ENCODE measurements at regions of chr19 and their contacts with region 1.

Region 1: GRCh38 chr19:34974646-34975045 is 10.6 kb upstream of the ZNF792 start:
- DNase-seq: no peak
- H3K4me3 ChIP-seq: no peak overlapping the region
- H3K27ac ChIP-seq: peak overlapping the region in 5 of 8 donors; percentile 28 to 79 (median 78)
- H3K4me1 ChIP-seq: peaks cover 0 to 34% (median 18%) of the 10 kb centered on the region in 6 donors
- H3K27me3 ChIP-seq: no peaks in the 10 kb centered on the region
- CTCF ChIP-seq: no peak
- POLR2A ChIP-seq: no peak

Region 2: GRCh38 chr19:35013031-35013819 is 38.6 kb after region 1 on chr19:
- intact Hi-C with region 1: loop called (anchors 2 kb)
- DNase-seq: peak; percentile 94
- H3K4me3 ChIP-seq: peak overlapping the region in 1 of 8 donors; percentile 46
- H3K27ac ChIP-seq: peak overlapping the region; percentile 42 to 99 (median 76)
- H3K4me1 ChIP-seq: peaks cover 28 to 100% (median 78%) of the 10 kb centered on the region in 6 donors
- H3K27me3 ChIP-seq: no peaks in the 10 kb centered on the region
- CTCF ChIP-seq: peak; percentile 97 to 99 (median 99)
- POLR2A ChIP-seq: no peak

Region 3: DNA sequence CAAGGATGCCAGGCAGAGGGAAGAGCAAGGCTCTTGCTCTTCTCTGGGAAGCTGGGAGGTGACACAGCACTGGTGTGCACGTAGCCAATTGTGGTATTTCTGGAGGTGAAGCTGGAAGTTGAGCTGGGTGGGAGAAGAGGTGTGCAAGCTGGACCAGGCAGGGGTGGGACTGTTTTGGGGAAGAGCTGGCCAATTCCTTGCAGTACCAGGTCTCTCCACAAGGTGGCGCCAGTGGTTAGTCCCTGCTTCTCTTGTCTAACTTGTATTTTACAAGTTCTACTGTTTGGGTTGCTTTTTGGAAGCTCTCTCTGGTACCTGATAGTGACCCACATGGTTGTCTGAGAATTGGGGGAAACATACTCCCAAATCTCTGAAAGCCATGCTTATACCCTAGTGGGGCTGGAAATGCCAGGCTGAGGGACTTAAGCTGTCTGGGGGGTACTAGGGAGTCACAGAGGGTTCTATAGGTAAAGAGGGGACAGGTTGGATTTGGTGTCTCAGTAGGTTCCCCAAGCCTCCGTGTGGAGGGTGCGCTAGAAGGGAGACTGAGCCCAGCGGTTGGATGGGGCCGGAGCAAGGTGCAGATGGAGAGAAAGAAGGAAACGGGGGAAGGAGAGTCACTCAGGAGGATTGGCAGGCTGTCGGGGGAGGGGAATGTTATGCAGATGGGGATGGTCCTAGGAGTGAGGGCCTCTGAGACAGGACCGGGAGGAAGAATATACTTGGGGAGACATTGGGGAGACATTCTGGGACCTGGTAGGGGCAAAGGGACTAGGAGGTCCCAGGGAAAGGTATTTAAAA is 69.9 kb after region 1 on chr19:
- intact Hi-C with region 1: no loop called
- DNase-seq: no peak
- H3K4me3 ChIP-seq: no peak overlapping the region
- H3K27ac ChIP-seq: no peak overlapping the region
- H3K4me1 ChIP-seq: peaks cover 31 to 71% (median 53%) of the 10 kb centered on the region in 6 donors
- H3K27me3 ChIP-seq: peaks cover 0 to 23% (median 0%) of the 10 kb centered on the region in 7 donors
- CTCF ChIP-seq: peak; percentile 84 to 97 (median 92)
- POLR2A ChIP-seq: no peak

Region 4: DNA sequence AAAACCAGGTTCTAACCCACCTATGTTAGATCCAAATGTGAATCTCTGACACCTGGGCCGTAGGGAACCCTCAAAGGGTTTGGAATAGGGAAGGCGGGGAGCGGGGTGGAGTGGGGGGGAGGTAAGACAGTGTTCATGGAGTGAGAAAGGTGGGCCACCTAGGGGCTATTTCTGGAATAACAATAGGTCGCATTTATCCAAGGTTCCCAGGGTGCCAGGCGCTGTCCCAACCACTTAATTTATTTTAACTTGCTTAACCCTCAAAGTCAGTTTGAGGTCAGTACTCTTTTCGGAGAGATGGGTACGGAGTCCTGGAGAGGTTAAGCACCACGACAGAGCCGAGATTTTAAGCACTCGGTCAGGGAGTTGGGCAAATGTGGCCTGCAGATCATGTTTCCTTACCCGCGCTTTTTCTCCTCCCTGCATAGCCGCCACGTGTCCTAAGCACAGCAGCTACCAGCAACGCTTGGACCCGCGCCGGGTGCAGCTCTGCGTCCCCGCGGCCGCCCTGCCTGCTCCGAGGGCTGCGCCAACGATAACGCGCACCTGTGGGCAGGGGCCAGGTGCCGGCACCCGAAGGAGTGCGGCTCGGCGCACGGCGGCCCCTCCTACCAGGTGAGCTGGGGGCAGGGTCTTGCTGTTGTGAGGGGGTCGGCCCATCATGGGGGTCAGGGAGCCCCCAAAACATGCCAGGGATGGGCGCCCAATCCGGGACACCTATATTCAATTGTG is 116.0 kb after region 1 on chr19:
- intact Hi-C with region 1: loop called (anchors 5 kb)
- DNase-seq: no peak
- H3K4me3 ChIP-seq: peak overlapping the region in 1 of 8 donors; percentile 35
- H3K27ac ChIP-seq: no peak overlapping the region
- H3K4me1 ChIP-seq: peaks cover 7 to 46% (median 24%) of the 10 kb centered on the region in 6 donors
- H3K27me3 ChIP-seq: peaks cover 0 to 18% (median 4%) of the 10 kb centered on the region in 7 donors
- CTCF ChIP-seq: peak; percentile 30 to 78 (median 66)
- POLR2A ChIP-seq: no peak

Measured in spleen (tissue), 13 donors.